Mammary epithelial cell (primary cell): ENCODE measurements at regions of chr1 and their contacts with region 1.

Region 1: GRCh38 chr1:231806623-231807495 is 180.3 kb downstream of the DISC1 start:
- DNase-seq: peak; percentile 34
- H3K4me3 ChIP-seq: no peak overlapping the region
- H3K27ac ChIP-seq: no peak overlapping the region
- H3K4me1 ChIP-seq: peaks cover 6% of the 10 kb centered on the region
- H3K27me3 ChIP-seq: no peaks in the 10 kb centered on the region
- CTCF ChIP-seq: peak; percentile 52 to 70

Region 2: GRCh38 chr1:231724876-231725724 is 81.8 kb before region 1 on chr1:
- CTCF ChIA-PET with region 1: no interaction called
- dilution Hi-C with region 1: no loop called
- in situ Hi-C with region 1: no loop called
- intact Hi-C with region 1: loop called (anchors 1 kb)
- DNase-seq: peak; percentile 28
- H3K4me3 ChIP-seq: no peak overlapping the region
- H3K27ac ChIP-seq: no peak overlapping the region
- H3K4me1 ChIP-seq: no peaks in the 10 kb centered on the region
- H3K27me3 ChIP-seq: peaks cover 2% of the 10 kb centered on the region
- CTCF ChIP-seq: peak; percentile 37 to 50

Region 3: DNA sequence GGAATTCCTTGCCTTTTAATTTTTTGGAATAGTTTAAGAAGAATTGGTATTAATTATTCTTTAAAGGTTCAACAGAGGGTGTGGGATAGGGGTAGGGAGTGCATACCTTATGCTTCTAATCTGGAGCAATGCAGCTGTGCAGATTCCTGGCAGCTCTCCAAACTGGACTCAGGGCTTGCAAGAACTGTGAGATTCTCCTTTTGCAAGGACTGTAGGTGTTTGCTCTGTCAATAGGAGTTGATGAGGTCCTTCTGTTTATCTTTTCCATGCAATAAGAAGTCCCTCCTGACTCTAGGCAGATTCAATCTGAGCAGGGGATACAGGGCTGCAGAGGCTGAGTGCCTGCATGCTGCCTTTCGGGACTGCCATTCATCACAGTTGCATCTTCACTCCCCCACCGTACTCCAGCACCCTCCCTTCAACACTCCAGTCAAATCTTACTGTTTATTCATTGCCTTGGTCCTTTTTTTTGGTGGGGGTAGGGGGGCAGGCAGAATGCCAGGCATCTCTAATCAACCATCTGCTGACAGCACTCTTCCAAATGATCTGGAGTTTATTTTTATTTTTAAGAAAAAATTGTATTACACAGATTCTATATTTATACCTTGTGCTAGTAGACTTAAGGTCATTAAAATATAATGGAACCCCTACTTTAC is 58.0 kb before region 1 on chr1:
- CTCF ChIA-PET with region 1: no interaction called
- dilution Hi-C with region 1: no loop called
- in situ Hi-C with region 1: no loop called
- intact Hi-C with region 1: no loop called
- DNase-seq: no peak
- H3K4me3 ChIP-seq: no peak overlapping the region
- H3K27ac ChIP-seq: no peak overlapping the region
- H3K4me1 ChIP-seq: no peaks in the 10 kb centered on the region
- H3K27me3 ChIP-seq: peaks cover 2% of the 10 kb centered on the region
- CTCF ChIP-seq: no peak

Region 4: GRCh38 chr1:231763456-231763855 is 43.4 kb before region 1 on chr1:
- CTCF ChIA-PET with region 1: no interaction called
- dilution Hi-C with region 1: no loop called
- in situ Hi-C with region 1: no loop called
- intact Hi-C with region 1: no loop called
- DNase-seq: no peak
- H3K4me3 ChIP-seq: no peak overlapping the region
- H3K27ac ChIP-seq: no peak overlapping the region
- H3K4me1 ChIP-seq: no peaks in the 10 kb centered on the region
- H3K27me3 ChIP-seq: no peaks in the 10 kb centered on the region
- CTCF ChIP-seq: no peak